Activated CD4-positive, alpha-beta memory T cell treated with anti-CD3 and anti-CD28 coated beads for 36 hours (primary cell): ENCODE measurements at regions of chr1 and their contacts with region 1.

Region 1: DNA sequence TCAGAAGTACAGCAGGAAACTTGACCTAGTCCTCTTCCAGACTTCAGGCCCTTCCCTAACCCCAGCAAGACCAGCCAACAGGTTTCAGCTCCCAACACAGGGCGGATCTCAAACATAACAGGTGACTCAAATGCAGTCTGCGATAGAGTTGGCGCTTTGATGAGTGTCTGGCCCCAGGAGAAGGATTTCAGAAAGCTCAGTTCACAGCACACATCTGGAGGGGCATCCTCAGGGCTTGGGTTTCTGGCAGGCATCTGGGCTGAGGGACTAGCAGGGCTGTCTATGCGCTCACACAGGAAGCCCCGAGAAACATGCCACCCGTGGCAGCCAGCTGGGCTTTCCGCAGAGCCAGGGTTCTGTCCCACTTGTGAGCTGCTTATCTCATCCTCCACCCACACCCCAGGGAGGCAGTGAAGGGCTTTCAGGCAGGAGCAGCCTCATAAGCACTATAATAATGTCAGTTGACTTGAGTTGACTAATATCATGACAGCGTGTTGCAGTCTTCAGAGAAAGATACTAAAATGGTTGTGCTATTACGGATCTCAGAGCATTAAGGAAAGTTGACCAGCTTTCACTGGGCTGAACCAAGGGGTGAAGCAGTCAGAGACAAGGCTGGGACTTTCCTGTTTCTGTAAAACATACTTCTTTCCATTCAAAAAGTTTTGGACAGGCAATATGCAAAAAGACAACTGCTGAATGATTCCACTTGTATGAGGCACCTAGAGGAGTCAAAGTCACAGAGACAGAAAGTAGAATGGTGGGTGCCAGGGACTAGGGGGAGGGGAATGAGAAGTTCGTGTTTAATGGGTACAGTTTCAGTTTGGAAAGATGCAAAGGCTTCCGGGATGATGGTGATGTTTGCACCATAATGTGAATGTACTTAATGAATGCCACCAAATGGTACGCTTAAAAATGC is 233.0 kb upstream of the IRF2BP2 start:
- DNase-seq: peak; percentile 93
- H3K4me3 Mint-ChIP-seq: peak overlapping the region; percentile 71
- H3K27ac Mint-ChIP-seq: peak overlapping the region; percentile 99
- H3K4me1 Mint-ChIP-seq: peaks cover 87% of the 10 kb centered on the region
- H3K27me3 Mint-ChIP-seq: no peaks in the 10 kb centered on the region

Region 2: GRCh38 chr1:234722904-234723720 is 119.9 kb before region 1 on chr1:
- CTCF ChIA-PET with region 1: interaction called, 8 read pairs
- POLR2A ChIA-PET with region 1: interaction called, 35 read pairs
- intact Hi-C with region 1: loop called (anchors 1 kb)
- DNase-seq: peak; percentile 91
- H3K4me3 Mint-ChIP-seq: peak overlapping the region; percentile 60
- H3K27ac Mint-ChIP-seq: peak overlapping the region; percentile 96
- H3K4me1 Mint-ChIP-seq: peaks cover 66% of the 10 kb centered on the region
- H3K27me3 Mint-ChIP-seq: no peaks in the 10 kb centered on the region

Region 3: DNA sequence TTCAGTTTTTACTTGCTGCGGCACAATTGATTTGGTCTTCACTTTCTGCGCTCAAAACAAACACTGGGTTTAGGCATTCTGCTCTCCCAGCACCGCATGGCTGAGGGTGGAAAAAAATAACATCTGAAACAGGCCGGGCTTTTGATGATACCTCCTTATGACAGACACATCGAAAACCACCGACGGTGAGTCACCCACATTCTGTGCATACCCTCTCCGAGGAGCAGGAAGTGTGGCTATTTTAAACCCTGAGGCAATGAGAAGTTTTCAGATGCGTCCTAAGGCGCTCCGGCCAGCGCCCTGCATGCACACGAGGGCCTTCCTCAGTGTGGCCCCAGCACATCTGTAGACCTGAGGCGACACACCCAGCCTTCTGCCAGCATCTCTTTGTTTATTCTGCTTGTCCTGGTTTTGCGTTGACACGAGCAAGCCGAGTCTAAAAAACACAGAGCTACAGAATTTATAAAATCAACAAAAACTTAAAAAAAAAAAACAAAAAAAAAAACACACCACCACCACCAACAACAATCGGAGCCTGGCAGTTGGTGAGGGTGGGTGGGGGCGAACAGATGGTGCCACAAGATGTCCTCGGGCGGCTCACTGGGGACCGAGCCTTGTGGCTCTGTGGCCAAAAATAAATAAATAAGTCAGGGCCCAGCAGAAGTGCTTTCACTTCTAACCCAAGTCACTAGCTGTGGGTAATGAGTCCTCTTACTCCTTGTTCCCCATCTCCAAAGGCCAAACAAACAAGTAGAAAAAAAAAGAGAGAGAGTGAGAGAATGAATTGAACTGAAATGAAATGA is 70.4 kb before region 1 on chr1:
- CTCF ChIA-PET with region 1: interaction called, 3 read pairs
- POLR2A ChIA-PET with region 1: interaction called, 14 read pairs
- intact Hi-C with region 1: loop called (anchors 1 kb)
- DNase-seq: peak; percentile 95
- H3K4me3 Mint-ChIP-seq: peak overlapping the region; percentile 49
- H3K27ac Mint-ChIP-seq: peak overlapping the region; percentile 84
- H3K4me1 Mint-ChIP-seq: peaks cover 54% of the 10 kb centered on the region
- H3K27me3 Mint-ChIP-seq: no peaks in the 10 kb centered on the region

Region 4: DNA sequence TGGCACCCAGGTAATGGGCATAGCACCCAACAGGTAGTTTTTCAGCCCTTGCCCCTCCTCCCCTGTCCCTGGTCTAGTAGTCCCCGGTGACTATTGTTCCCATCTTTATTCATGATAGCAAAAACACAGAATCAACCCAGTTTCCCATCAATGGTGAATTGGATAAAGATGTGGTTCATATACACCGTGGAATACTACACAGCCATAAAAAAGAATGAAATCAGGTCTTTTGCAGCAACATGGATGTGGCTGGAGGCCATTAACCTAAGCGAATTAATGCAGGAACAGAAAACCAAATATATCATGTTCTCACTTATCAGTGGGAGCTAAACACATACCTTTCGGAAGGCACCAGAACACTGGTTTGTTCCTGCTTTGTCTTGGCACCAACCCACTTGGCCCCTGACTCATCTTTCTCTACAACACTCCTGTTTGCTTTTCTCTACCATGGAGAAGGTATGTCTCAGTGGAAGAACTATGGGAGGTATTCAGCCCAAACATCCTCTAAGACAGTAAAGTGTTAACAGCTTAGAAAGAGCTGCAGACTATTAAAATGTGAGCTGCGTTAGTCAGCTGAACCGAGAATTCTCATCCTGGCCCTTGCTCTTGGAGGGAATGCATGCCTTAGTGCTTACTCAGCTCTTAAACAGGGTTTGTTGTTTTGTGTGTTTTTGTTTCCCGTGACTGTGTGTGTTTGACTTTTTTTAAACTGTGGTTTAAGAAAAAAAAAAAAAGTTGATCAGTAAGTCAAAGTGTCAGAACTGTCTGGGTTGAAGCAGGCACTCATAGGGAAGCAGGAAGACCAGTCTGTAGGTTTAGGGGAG is 82.7 kb after region 1 on chr1:
- CTCF ChIA-PET with region 1: interaction called, 5 read pairs
- POLR2A ChIA-PET with region 1: interaction called, 14 read pairs
- intact Hi-C with region 1: loop called (anchors 1 kb)
- DNase-seq: peak; percentile 46
- H3K4me3 Mint-ChIP-seq: peak overlapping the region; percentile 66
- H3K27ac Mint-ChIP-seq: peak overlapping the region; percentile 98
- H3K4me1 Mint-ChIP-seq: peaks cover 54% of the 10 kb centered on the region
- H3K27me3 Mint-ChIP-seq: no peaks in the 10 kb centered on the region

Region 5: DNA sequence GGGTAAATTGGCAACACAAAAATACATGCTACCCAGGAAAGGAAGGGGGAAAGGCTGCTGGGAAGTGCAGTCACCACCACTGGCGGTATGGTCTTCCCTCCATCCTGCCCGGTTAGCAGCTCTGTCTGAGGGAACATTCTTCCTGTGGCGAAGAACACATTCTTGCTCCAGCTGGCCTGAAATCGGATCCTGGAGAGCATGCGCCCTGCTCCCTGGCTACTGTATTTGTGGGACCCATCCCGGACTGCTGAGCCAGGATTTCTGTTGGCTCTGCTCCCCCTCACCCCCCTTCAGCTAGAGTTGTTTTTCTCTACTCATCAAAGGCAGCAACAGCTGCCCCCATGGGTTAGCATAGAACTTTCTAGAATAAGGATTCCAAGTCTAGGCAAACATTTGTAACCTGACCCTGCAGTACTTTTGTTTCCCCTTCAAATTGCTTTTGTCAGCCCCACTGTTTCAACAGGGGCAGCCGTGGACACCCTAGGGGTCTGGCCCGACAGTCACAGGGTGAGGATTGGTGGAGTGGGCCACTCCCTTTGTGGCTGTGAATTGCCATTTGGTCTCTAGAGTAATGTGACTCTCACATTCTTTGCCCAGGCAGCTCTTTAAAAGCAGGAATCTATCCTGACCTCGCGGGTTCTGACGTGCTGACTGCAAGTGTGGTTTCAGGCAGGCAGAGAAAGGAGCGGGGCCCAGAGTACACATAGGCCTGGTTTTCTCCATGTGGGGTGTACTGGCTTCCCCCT is 127.9 kb after region 1 on chr1:
- CTCF ChIA-PET with region 1: interaction called, 3 read pairs
- POLR2A ChIA-PET with region 1: interaction called, 6 read pairs
- intact Hi-C with region 1: loop called (anchors 2 kb)
- DNase-seq: peak; percentile 70
- H3K4me3 Mint-ChIP-seq: peak overlapping the region; percentile 30
- H3K27ac Mint-ChIP-seq: peak overlapping the region; percentile 83
- H3K4me1 Mint-ChIP-seq: peaks cover 67% of the 10 kb centered on the region
- H3K27me3 Mint-ChIP-seq: no peaks in the 10 kb centered on the region

Region 6: DNA sequence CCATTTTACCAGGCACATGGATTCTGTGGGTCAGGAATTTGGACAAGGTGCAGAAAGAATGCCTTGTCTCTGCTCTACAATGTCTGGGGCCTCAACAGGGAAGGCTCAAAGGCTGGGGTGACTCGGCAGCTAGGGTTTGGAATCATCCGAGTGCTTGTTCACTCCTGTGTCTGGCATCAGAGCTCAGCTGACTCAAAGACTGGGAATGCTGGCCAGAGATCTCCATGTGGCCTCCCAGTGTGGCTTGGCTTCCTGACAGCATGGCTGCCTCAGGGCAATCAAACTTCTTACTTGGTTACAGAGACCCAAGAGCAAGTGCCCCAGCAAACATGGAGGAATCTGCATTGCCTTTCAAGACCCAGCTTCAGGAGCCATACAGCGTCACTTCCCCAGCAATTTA is 175.2 kb after region 1 on chr1:
- CTCF ChIA-PET with region 1: interaction called, 3 read pairs
- POLR2A ChIA-PET with region 1: interaction called, 7 read pairs
- intact Hi-C with region 1: loop called (anchors 1 kb)
- DNase-seq: no peak
- H3K4me3 Mint-ChIP-seq: no peak overlapping the region
- H3K27ac Mint-ChIP-seq: peak overlapping the region; percentile 66
- H3K4me1 Mint-ChIP-seq: peaks cover 74% of the 10 kb centered on the region
- H3K27me3 Mint-ChIP-seq: no peaks in the 10 kb centered on the region

Region 7: DNA sequence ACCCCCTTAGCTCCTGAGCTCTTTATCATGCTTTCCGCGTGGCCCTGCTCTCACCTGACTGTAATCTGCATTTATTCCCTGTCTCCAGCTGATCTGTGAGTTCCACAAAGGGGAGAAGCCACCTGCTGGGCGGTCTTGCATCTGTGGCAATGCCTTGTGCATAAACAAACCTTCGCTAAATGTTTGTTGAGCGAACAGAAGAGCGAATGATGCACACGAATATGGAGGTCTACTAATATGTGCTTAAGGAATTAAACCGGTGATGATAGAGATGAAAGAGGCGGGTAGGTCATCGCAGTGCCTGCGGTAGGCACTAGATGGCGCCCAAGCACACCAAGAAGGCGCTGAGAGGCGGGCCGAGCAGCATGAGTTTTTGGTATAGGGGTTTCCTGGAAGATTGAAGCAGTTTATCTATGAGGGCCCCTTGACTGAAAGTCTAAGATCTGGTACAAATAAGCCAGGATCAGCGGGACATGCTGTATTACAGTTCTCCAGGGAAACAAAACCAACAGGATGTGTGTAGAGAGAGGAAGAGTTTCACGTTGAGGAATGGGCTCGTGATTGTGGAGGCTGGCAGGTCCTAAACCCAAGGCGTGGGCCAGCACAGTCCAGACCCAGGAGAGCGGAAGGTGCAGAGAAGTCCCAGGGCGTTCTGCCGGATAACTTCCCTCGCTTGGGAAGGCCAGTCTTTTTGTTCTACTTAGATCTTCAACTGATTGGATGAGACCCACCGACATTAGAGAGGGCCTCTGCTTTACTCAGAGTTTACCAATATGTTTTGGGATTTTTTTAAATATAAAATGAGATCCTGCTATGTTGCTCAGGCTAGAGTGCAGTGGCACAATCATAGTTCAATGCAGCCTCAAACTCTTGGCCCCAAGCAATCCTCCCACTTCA is 251.0 kb after region 1 on chr1:
- CTCF ChIA-PET with region 1: no interaction called
- POLR2A ChIA-PET with region 1: no interaction called
- intact Hi-C with region 1: no loop called
- DNase-seq: peak; percentile 90
- H3K4me3 Mint-ChIP-seq: no peak overlapping the region
- H3K27ac Mint-ChIP-seq: no peak overlapping the region
- H3K4me1 Mint-ChIP-seq: peaks cover 14% of the 10 kb centered on the region
- H3K27me3 Mint-ChIP-seq: no peaks in the 10 kb centered on the region